Left lung (tissue), 14 donors: ENCODE measurements at regions of chr1 and their contacts with region 1.

Region 1: GRCh38 chr1:156725683-156726280 is 2.5 kb upstream of the METTL25B start:
- DNase-seq: peak; percentile 85 to 96 (median 91)
- ATAC-seq: peak; percentile 80
- H3K4me3 ChIP-seq: peak overlapping the region in 1 of 2 donors; percentile 64
- H3K27ac ChIP-seq: peak overlapping the region in 1 of 2 donors; percentile 40
- H3K4me1 ChIP-seq: peaks cover 32 to 56% of the 10 kb centered on the region in 2 donors
- H3K27me3 ChIP-seq: no peaks in the 10 kb centered on the region
- CTCF ChIP-seq: peak; percentile 91 to 97

Region 2: GRCh38 chr1:156689035-156689952 is 36.5 kb before region 1 on chr1:
- intact Hi-C with region 1: loop called in 1 of 2 experiments (anchors 2 kb)
- DNase-seq: peak; percentile 73 to 90 (median 84)
- ATAC-seq: peak; percentile 84
- H3K4me3 ChIP-seq: no peak overlapping the region
- H3K27ac ChIP-seq: no peak overlapping the region
- H3K4me1 ChIP-seq: peaks cover 12 to 22% of the 10 kb centered on the region in 2 donors
- H3K27me3 ChIP-seq: peaks cover 0 to 99% of the 10 kb centered on the region in 2 donors
- CTCF ChIP-seq: peak; percentile 95 to 96

Region 3: DNA sequence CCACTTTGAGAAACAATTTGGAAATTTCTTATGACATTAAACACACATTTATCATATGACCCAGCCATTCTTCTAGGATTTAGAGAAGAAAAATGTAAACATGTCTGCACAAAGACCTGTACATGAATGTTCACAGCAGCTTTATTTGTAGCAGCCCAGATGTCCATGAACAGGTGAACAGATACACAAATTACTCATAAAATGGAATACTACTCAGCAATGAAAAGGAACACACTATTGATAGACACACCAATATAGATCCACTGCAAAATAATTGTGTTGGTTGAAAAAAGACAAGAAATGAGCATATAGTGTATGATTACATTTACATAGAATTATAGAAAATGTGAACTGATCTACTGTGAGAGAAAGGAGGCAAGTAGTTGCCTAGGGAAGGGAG is 293.7 kb after region 1 on chr1:
- intact Hi-C with region 1: no loop called
- DNase-seq: no peak
- ATAC-seq: no peak
- H3K4me3 ChIP-seq: no peak overlapping the region
- H3K27ac ChIP-seq: no peak overlapping the region
- H3K4me1 ChIP-seq: no peaks in the 10 kb centered on the region
- H3K27me3 ChIP-seq: no peaks in the 10 kb centered on the region
- CTCF ChIP-seq: no peak